ENCODE measurements at regions of chr10 and their contacts with region 1.

Region 1: DNA sequence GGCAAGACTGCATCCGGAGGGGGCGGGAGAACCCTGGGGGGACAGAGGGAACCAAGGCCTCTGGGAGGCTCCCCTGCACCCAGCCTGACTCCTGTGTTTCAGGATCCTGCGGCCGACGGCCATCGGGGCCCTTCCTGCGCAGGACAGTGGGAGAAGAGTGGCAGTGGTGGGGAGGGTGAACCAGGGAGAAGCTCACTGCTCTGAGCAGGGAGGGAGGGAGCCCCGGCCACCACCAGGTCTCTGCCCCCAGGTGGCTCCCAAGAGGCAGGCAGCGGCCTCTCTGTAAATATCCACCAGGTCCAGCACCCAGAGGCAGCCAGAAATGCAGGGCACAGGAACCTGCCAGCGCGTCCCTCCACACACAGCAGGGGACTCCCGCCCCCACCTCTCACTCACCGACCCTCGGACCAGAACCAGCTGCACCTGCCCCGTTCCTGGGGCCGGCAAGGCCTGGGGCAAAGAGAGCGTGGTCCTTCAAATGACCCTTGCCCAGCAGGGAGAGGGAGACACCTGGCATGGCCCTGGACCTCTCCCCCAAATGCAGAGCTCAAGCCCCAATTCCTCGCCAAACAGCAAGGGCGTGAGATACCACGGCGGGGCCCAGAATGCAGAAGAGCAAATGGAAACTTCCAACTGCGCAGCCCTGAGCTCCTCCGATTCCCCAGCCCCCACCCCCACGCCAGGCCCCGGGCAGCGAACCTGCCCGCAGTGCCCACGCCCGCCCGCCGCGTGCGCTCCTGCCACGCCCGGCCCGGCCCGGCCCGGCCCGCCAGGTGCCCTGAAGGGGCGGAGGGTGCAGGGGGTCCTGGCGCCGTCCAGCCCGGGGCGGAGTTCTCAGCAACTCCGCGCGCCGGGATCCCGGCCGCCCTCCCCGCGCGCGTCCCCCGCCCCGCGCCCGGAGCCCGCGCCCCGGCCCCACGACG is 805 bp downstream of the RASGEF1A start:
- DNase-seq: peak; percentile 55
- ATAC-seq: peak; percentile 61
- H3K4me3 Mint-ChIP-seq: peak overlapping the region; percentile 74
- H3K27ac Mint-ChIP-seq: no peak overlapping the region
- H3K4me1 Mint-ChIP-seq: peaks cover 7% of the 10 kb centered on the region
- H3K27me3 Mint-ChIP-seq: peaks cover 54% of the 10 kb centered on the region
- CTCF ChIP-seq: no peak

Region 2: GRCh38 chr10:43221419-43222209 is 44.4 kb before region 1 on chr10:
- CTCF ChIA-PET with region 1: interaction called, 32 read pairs
- POLR2A ChIA-PET with region 1: interaction called, 4 read pairs
- DNase-seq: peak; percentile 75
- ATAC-seq: peak; percentile 97
- H3K4me3 Mint-ChIP-seq: no peak overlapping the region
- H3K27ac Mint-ChIP-seq: no peak overlapping the region
- H3K4me1 Mint-ChIP-seq: peaks cover 8% of the 10 kb centered on the region
- H3K27me3 Mint-ChIP-seq: no peaks in the 10 kb centered on the region
- CTCF ChIP-seq: no peak

Region 3: GRCh38 chr10:43229208-43230061 is 36.6 kb before region 1 on chr10:
- CTCF ChIA-PET with region 1: interaction called, 21 read pairs
- POLR2A ChIA-PET with region 1: no interaction called
- DNase-seq: peak; percentile 65
- ATAC-seq: peak; percentile 78
- H3K4me3 Mint-ChIP-seq: peak overlapping the region; percentile 74
- H3K27ac Mint-ChIP-seq: no peak overlapping the region
- H3K4me1 Mint-ChIP-seq: peaks cover 7% of the 10 kb centered on the region
- H3K27me3 Mint-ChIP-seq: peaks cover 51% of the 10 kb centered on the region
- CTCF ChIP-seq: no peak

Region 4: DNA sequence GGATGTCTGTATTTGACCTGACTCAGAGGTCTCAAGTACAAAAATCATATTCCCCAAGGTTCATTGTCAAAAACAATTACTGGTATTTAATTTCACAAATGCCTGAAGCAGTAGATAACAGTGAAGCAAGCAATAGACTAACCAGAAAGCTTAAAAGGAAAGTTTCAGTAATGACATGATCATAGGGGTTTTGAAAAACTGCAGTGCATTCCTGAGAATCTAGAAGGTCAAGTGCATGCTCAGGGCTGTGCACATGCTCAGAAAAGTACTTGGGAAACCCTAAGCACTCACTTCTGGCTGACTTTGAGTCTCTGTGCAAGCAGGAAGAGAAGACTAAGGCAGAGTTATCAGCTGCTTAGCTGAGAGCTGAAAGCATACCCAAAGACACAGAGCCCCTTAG is 26.3 kb before region 1 on chr10:
- CTCF ChIA-PET with region 1: no interaction called
- POLR2A ChIA-PET with region 1: no interaction called
- DNase-seq: no peak
- ATAC-seq: no peak
- H3K4me3 Mint-ChIP-seq: no peak overlapping the region
- H3K27ac Mint-ChIP-seq: no peak overlapping the region
- H3K4me1 Mint-ChIP-seq: no peaks in the 10 kb centered on the region
- H3K27me3 Mint-ChIP-seq: peaks cover 13% of the 10 kb centered on the region
- CTCF ChIP-seq: no peak

Region 5: DNA sequence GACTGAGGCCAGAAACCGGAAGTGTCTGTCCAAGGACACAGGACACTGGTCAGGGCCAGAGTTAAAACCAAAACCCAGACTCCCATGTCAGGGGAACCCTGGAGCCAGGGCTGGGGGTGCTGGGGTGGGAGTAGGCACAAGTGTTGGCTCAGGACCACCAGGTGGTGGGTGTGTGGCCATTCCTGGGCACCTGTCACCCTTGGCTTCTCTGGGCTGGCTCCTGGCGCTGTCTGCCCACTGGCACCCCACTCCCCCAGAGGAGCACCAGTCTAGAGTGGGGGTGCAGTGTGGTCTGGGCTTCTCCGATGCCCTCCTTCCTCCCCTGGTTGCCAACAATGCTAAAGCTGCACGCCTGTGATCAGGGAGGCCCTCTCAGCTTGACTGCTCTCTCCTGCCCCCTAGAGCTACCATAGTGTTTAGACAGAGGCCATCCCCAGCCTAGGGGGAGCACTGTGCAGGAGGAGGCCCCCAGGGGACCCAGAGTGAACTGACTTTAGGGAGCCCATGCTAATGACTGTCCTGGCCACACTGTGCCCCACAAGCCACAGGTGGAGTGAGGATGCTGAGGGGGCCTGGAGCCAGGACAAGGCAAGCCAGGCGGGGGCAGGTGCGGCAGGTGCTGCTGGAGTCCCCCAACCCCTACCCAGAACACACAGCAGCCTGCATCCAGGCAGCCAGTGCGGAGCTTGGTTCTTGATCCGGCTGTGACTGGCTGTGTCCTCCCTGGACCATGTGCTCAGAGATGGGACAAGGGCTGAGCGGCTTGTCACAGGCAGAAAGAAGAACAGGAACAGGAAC is 10.2 kb before region 1 on chr10:
- CTCF ChIA-PET with region 1: interaction called, 52 read pairs
- POLR2A ChIA-PET with region 1: no interaction called
- DNase-seq: peak; percentile 74
- ATAC-seq: peak; percentile 94
- H3K4me3 Mint-ChIP-seq: no peak overlapping the region
- H3K27ac Mint-ChIP-seq: no peak overlapping the region
- H3K4me1 Mint-ChIP-seq: peaks cover 15% of the 10 kb centered on the region
- H3K27me3 Mint-ChIP-seq: no peaks in the 10 kb centered on the region; the same call in 1 of the 2 replicates
- CTCF ChIP-seq: peak; percentile 63

Region 6: DNA sequence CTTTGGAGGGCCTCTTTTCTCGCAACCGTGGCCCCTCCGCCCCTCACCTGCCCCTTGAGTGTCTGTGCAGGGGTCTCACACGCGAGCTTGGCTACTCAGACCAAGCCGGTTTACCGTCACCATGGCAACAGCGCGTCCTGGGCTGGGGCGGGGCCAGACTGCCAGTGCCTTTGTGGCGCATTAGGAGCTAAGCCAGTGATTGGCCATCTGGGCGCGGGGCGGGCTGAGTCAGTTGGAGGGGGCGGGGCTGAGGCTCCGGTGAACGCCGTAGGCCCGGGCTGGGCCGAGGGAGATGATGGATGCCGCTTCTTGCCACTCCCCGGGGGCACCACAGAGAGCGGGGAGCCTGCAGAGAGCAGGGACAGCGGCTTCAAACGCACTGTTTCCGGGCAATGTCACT is 56.7 kb after region 1 on chr10:
- CTCF ChIA-PET with region 1: interaction called, 12 read pairs
- POLR2A ChIA-PET with region 1: no interaction called
- DNase-seq: peak; percentile 99
- ATAC-seq: peak; percentile 99
- H3K4me3 Mint-ChIP-seq: peak overlapping the region; percentile 62
- H3K27ac Mint-ChIP-seq: no peak overlapping the region
- H3K4me1 Mint-ChIP-seq: peaks cover 33% of the 10 kb centered on the region
- H3K27me3 Mint-ChIP-seq: no peaks in the 10 kb centered on the region; the same call in 1 of the 2 replicates
- CTCF ChIP-seq: no peak

Region 7: DNA sequence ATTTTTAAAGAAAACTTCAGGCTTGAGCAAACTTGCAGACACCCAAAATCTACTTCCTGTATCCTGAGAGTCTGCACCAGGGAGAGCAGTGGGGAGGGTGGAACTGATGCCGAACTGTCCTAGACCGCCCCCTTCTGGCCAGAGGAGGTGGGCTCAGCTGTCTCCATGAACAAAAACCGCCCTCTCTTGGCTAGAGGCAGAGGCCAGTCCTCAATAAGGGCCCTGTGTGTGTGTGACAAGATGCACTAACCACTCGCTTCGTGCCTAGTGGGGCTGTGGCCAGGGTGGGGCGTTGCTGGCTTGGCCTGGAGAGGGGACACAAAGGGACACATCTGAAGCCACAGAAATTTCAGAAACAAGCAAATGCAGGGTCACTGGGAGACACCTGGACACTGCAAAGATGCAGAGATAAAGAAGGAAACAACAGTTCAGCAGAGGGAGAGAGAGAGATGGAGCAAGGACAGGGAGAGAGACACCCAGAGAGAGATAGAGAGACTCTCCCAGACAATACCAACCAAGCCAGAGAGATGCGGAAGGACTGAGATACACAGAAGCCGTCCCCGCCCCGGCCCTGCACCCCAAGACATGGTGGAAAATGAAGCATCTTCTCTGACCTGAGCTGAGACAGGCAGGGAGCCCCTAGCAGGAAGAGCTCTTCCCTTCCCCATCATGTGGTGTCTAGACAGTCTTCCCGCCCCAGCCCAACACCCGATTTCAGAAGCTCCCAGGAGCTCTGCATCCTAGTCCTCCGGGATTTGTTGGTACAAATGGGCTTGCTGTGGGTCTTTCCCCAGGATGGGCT is 82.7 kb after region 1 on chr10:
- CTCF ChIA-PET with region 1: interaction called, 13 read pairs
- POLR2A ChIA-PET with region 1: no interaction called
- DNase-seq: peak; percentile 88
- ATAC-seq: peak; percentile 99
- H3K4me3 Mint-ChIP-seq: no peak overlapping the region
- H3K27ac Mint-ChIP-seq: peak overlapping the region; percentile 81
- H3K4me1 Mint-ChIP-seq: peaks cover 20% of the 10 kb centered on the region
- H3K27me3 Mint-ChIP-seq: no peaks in the 10 kb centered on the region
- CTCF ChIP-seq: peak; percentile 87